CD4-positive, alpha-beta T cell (primary cell): ENCODE measurements at regions of chr6 and their contacts with region 1.

Region 1: GRCh38 chr6:30828027-30828960 is 56.0 kb upstream of the DDR1 start:
- DNase-seq: peak; percentile 64 to 89 (median 80)
- ATAC-seq: peak; percentile 84
- H3K4me3 ChIP-seq: peak overlapping the region; percentile 62
- H3K4me3 Mint-ChIP-seq: peak overlapping the region; percentile 92
- H3K27ac ChIP-seq: peak overlapping the region in 1 of 2 donors; percentile 48
- H3K27ac Mint-ChIP-seq: peak overlapping the region; percentile 91
- H3K4me1 ChIP-seq: peaks cover 63% of the 10 kb centered on the region
- H3K4me1 Mint-ChIP-seq: peaks cover 79% of the 10 kb centered on the region
- H3K27me3 ChIP-seq: no peaks in the 10 kb centered on the region
- H3K27me3 Mint-ChIP-seq: no peaks in the 10 kb centered on the region
- CTCF ChIP-seq: peak; percentile 82

Region 2: GRCh38 chr6:30678964-30679726 is 149.1 kb before region 1 on chr6:
- CTCF ChIA-PET with region 1: interaction called, 4 read pairs
- POLR2A ChIA-PET with region 1: no interaction called
- intact Hi-C with region 1: loop called in 1 of 2 experiments (anchors 5 kb)
- DNase-seq: peak; percentile 84 to 96 (median 94)
- ATAC-seq: peak; percentile 41
- H3K4me3 ChIP-seq: peak overlapping the region; percentile 99
- H3K4me3 Mint-ChIP-seq: peak overlapping the region; percentile 98
- H3K27ac ChIP-seq: peak overlapping the region; percentile 41 to 98
- H3K27ac Mint-ChIP-seq: peak overlapping the region; percentile 94
- H3K4me1 ChIP-seq: peaks cover 49% of the 10 kb centered on the region
- H3K4me1 Mint-ChIP-seq: peaks cover 47% of the 10 kb centered on the region
- H3K27me3 ChIP-seq: no peaks in the 10 kb centered on the region
- H3K27me3 Mint-ChIP-seq: no peaks in the 10 kb centered on the region
- CTCF ChIP-seq: peak; percentile 91

Region 3: GRCh38 chr6:30700340-30700739 is 128.0 kb before region 1 on chr6:
- CTCF ChIA-PET with region 1: no interaction called
- POLR2A ChIA-PET with region 1: no interaction called
- intact Hi-C with region 1: no loop called
- DNase-seq: no peak
- ATAC-seq: no peak
- H3K4me3 ChIP-seq: no peak overlapping the region
- H3K4me3 Mint-ChIP-seq: no peak overlapping the region
- H3K27ac ChIP-seq: no peak overlapping the region
- H3K27ac Mint-ChIP-seq: no peak overlapping the region
- H3K4me1 ChIP-seq: no peaks in the 10 kb centered on the region
- H3K4me1 Mint-ChIP-seq: no peaks in the 10 kb centered on the region
- H3K27me3 ChIP-seq: no peaks in the 10 kb centered on the region
- H3K27me3 Mint-ChIP-seq: no peaks in the 10 kb centered on the region
- CTCF ChIP-seq: no peak

Region 4: DNA sequence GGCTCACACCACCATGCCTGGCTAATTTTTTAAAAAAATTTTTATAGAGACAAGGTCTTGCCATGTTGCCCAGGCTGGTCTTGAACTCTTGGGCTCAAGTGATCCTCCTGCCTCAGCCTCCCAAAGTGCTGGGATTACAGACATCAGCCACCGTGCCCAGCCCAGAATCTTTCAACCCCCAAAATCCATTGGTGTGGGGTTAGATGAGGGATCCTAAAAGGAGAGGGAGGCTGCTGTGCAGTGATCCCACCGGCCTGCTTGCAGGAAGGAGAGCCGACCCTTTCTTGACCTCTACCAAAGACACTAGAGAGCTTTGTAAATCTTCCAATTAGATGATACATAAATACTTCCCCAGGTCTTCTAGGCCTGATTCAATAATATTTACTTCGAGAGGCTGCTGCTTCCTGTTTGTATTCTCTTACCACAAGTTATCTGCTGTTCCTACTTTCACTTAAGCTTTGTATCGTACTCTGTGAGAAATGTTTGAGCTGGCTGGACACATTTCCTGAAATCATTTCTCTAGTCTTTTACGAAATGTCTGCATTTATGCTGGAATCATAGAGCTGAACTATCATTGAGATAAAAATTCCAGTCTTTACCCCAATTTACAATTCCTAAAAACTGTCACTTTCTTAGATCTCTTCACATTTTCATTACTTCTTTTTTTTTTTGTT is 34.6 kb before region 1 on chr6:
- CTCF ChIA-PET with region 1: interaction called, 5 read pairs
- POLR2A ChIA-PET with region 1: interaction called, 13 read pairs
- intact Hi-C with region 1: no loop called
- DNase-seq: peak in 6 of 14 experiments; percentile 6 to 79 (median 44)
- ATAC-seq: peak; percentile 95
- H3K4me3 ChIP-seq: peak overlapping the region; percentile 17
- H3K4me3 Mint-ChIP-seq: peak overlapping the region; percentile 76
- H3K27ac ChIP-seq: peak overlapping the region; percentile 72 to 79
- H3K27ac Mint-ChIP-seq: peak overlapping the region; percentile 98
- H3K4me1 ChIP-seq: peaks cover 52% of the 10 kb centered on the region
- H3K4me1 Mint-ChIP-seq: peaks cover 67% of the 10 kb centered on the region
- H3K27me3 ChIP-seq: no peaks in the 10 kb centered on the region
- H3K27me3 Mint-ChIP-seq: no peaks in the 10 kb centered on the region
- CTCF ChIP-seq: no peak

Region 5: DNA sequence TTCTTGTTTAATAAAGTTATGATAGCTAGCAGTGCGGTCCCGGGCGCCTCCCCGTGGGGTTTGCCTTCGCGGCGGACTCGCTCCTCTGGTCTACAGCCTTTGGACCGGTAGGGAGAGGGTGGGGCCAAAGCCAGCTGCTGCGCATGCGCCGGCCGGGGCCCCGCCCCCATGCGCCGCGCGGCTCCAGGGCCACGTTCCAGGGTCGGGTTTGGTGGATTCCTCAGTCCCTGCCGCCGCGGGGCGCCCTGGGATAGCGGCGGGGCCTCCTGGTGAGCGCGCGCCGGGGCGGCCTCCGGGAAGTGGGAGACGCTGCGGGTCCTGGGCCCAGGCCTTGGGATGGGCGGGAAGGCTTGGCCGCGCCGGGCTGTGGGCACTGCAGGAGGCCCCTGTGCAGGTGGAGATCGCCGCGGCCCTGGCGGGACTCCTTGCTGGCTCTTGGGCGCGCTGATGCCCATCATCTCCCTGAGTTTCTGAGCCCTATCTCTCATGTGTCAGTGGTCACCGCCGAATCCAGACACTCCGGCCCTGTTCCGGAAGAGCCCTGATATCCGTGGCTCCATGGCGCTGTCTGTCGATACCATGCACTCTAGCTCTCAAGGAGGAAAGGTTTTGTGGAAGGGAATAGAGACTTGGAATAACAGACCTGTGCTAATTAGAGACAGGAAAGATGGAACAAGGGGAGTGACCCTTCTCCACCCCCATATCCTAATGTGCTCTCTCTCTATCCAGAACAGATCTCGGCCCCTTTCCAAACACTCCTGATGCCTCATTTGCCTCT is 86.0 kb after region 1 on chr6 and contains the start of gene VARS2:
- CTCF ChIA-PET with region 1: interaction called, 13 read pairs
- POLR2A ChIA-PET with region 1: interaction called, 11 read pairs
- intact Hi-C with region 1: no loop called
- DNase-seq: peak; percentile 69 to 94 (median 80)
- ATAC-seq: peak; percentile 96
- H3K4me3 ChIP-seq: peak within 1 kb of the TSS; percentile 82
- H3K4me3 Mint-ChIP-seq: peak within 1 kb of the TSS; percentile 96
- H3K27ac ChIP-seq: peak within 1 kb of the TSS; percentile 45 to 53
- H3K27ac Mint-ChIP-seq: peak within 1 kb of the TSS; percentile 87
- H3K4me1 ChIP-seq: peaks cover 19% of the 10 kb centered on the region
- H3K4me1 Mint-ChIP-seq: peaks cover 21% of the 10 kb centered on the region
- H3K27me3 ChIP-seq: no peaks in the 10 kb centered on the region
- H3K27me3 Mint-ChIP-seq: no peaks in the 10 kb centered on the region
- CTCF ChIP-seq: no peak
- total RNA-seq, gene VARS2: 19.3 to 21.7 TPM

Region 6: GRCh38 chr6:31087494-31088089 is 259.3 kb after region 1 on chr6:
- CTCF ChIA-PET with region 1: interaction called, 17 read pairs
- POLR2A ChIA-PET with region 1: interaction called, 3 read pairs
- intact Hi-C with region 1: loop called (anchors 1 to 2 kb)
- DNase-seq: peak; percentile 77 to 96 (median 90)
- ATAC-seq: peak; percentile 99
- H3K4me3 ChIP-seq: no peak overlapping the region
- H3K4me3 Mint-ChIP-seq: no peak overlapping the region
- H3K27ac ChIP-seq: no peak overlapping the region
- H3K27ac Mint-ChIP-seq: no peak overlapping the region
- H3K4me1 ChIP-seq: peaks cover 10% of the 10 kb centered on the region
- H3K4me1 Mint-ChIP-seq: peaks cover 21% of the 10 kb centered on the region
- H3K27me3 ChIP-seq: no peaks in the 10 kb centered on the region
- H3K27me3 Mint-ChIP-seq: no peaks in the 10 kb centered on the region
- CTCF ChIP-seq: peak; percentile 74